Naive thymus-derived CD4-positive, alpha-beta T cell (primary cell): ENCODE measurements at regions of chr17 and their contacts with region 1.

Region 1: GRCh38 chr17:27879987-27880608 is 13.1 kb downstream of the LYRM9 start:
- DNase-seq: peak; percentile 23 to 70 (median 54)
- ATAC-seq: peak; percentile 84
- H3K4me3 ChIP-seq: no peak overlapping the region
- H3K4me3 Mint-ChIP-seq: peak overlapping the region in 7 of 10 donors; percentile 14 to 77 (median 51)
- H3K27ac ChIP-seq: no peak overlapping the region
- H3K27ac Mint-ChIP-seq: peak overlapping the region in 3 of 9 donors; percentile 25 to 70 (median 62)
- H3K4me1 ChIP-seq: peaks cover 4 to 16% of the 10 kb centered on the region in 2 donors
- H3K4me1 Mint-ChIP-seq: peaks cover 19 to 37% (median 24%) of the 10 kb centered on the region in 7 donors
- H3K27me3 ChIP-seq: no peaks in the 10 kb centered on the region
- H3K27me3 Mint-ChIP-seq: no peaks in the 10 kb centered on the region

Region 2: DNA sequence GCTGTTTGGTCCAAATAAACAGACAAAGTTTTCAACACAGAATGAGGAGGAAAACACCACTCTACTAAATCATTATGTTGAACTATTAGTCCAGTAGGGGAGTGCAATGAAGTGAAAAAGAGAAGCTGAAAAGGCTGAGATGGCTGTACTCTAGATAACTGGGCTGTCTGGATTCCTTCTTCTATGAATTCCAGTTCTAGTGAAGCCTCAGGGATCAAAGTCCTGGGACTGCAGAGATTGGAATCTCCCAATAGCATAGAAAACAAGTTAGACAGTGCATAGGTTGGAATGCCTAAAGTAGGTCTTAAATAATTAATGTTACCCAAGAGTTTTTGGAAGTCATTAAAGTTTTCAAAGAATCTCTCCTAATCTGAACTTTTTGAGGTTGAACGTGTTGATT is 189.2 kb before region 1 on chr17:
- CTCF ChIA-PET with region 1: no interaction called
- POLR2A ChIA-PET with region 1: no interaction called
- intact Hi-C with region 1: no loop called
- DNase-seq: no peak
- ATAC-seq: no peak
- H3K4me3 ChIP-seq: no peak overlapping the region
- H3K4me3 Mint-ChIP-seq: no peak overlapping the region
- H3K27ac ChIP-seq: no peak overlapping the region
- H3K27ac Mint-ChIP-seq: no peak overlapping the region
- H3K4me1 ChIP-seq: no peaks in the 10 kb centered on the region
- H3K4me1 Mint-ChIP-seq: no peaks in the 10 kb centered on the region
- H3K27me3 ChIP-seq: no peaks in the 10 kb centered on the region
- H3K27me3 Mint-ChIP-seq: peaks cover 7 to 34% (median 13%) of the 10 kb centered on the region in 5 donors

Region 3: DNA sequence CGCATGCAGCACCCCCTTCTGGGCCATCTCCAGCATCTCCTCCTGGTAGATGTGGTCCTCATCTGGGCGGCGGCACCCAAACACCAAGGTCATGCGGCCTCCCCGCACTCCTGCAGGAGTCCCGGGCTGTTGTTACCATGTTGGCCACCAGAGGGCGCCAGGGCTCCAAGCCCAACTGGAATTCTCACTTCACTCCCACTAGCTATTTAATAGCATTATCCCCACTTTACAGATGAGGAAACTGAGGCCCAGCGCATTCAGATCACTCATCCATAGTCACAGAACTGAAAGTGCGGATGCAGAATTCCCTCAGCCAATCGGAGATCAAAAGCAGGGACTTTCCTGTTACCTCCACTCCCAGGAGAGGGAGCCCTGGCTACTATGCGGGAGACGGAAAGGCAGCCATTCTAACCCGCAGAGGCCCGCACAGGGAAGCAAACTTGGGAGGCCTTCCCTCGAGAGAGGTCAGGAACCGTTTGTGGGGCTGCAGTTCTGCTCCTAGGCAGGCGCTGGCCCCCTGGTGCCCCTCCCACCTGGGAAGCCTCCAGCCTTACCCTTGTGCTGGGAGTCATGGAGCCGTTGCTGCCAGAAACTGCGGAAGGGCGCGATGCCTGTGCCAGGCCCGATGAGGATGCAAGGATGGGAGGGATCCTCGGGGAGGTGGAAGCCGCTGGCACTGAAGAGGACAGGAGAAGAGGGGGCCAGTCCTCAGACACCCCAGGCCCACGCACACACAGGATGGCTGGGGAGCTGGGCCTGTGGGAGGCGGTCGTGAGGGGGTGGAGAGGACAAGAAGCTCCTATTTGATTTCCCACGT is 119.8 kb before region 1 on chr17:
- CTCF ChIA-PET with region 1: interaction called, 13 read pairs
- POLR2A ChIA-PET with region 1: no interaction called
- intact Hi-C with region 1: loop called in 1 of 2 experiments (anchors 1 kb)
- DNase-seq: peak; percentile 28 to 77 (median 59)
- ATAC-seq: peak; percentile 73
- H3K4me3 ChIP-seq: no peak overlapping the region
- H3K4me3 Mint-ChIP-seq: no peak overlapping the region
- H3K27ac ChIP-seq: no peak overlapping the region
- H3K27ac Mint-ChIP-seq: no peak overlapping the region
- H3K4me1 ChIP-seq: no peaks in the 10 kb centered on the region
- H3K4me1 Mint-ChIP-seq: peaks cover 0 to 7% (median 0%) of the 10 kb centered on the region in 7 donors
- H3K27me3 ChIP-seq: no peaks in the 10 kb centered on the region
- H3K27me3 Mint-ChIP-seq: no peaks in the 10 kb centered on the region

Region 4: GRCh38 chr17:27996208-27997043 is 116.3 kb after region 1 on chr17:
- CTCF ChIA-PET with region 1: no interaction called
- POLR2A ChIA-PET with region 1: no interaction called
- intact Hi-C with region 1: no loop called
- DNase-seq: no peak
- ATAC-seq: no peak
- H3K4me3 ChIP-seq: no peak overlapping the region
- H3K4me3 Mint-ChIP-seq: no peak overlapping the region
- H3K27ac ChIP-seq: no peak overlapping the region
- H3K27ac Mint-ChIP-seq: no peak overlapping the region
- H3K4me1 ChIP-seq: no peaks in the 10 kb centered on the region
- H3K4me1 Mint-ChIP-seq: no peaks in the 10 kb centered on the region
- H3K27me3 ChIP-seq: no peaks in the 10 kb centered on the region
- H3K27me3 Mint-ChIP-seq: peaks cover 11 to 25% (median 16%) of the 10 kb centered on the region in 5 donors

Region 5: GRCh38 chr17:28540231-28540630 is 660.1 kb after region 1 on chr17:
- CTCF ChIA-PET with region 1: no interaction called
- POLR2A ChIA-PET with region 1: no interaction called
- intact Hi-C with region 1: no loop called
- DNase-seq: no peak
- ATAC-seq: no peak
- H3K4me3 ChIP-seq: no peak overlapping the region
- H3K4me3 Mint-ChIP-seq: no peak overlapping the region
- H3K27ac ChIP-seq: no peak overlapping the region
- H3K27ac Mint-ChIP-seq: peak overlapping the region in 1 of 9 donors; percentile 13
- H3K4me1 ChIP-seq: no peaks in the 10 kb centered on the region
- H3K4me1 Mint-ChIP-seq: peaks cover 0 to 5% (median 0%) of the 10 kb centered on the region in 7 donors
- H3K27me3 ChIP-seq: no peaks in the 10 kb centered on the region
- H3K27me3 Mint-ChIP-seq: no peaks in the 10 kb centered on the region